Activated CD4-positive, alpha-beta T cell treated with anti-CD3 and anti-CD28 coated beads for 36 hours (primary cell): ENCODE measurements at regions of chr3 and their contacts with region 1.

Region 1: DNA sequence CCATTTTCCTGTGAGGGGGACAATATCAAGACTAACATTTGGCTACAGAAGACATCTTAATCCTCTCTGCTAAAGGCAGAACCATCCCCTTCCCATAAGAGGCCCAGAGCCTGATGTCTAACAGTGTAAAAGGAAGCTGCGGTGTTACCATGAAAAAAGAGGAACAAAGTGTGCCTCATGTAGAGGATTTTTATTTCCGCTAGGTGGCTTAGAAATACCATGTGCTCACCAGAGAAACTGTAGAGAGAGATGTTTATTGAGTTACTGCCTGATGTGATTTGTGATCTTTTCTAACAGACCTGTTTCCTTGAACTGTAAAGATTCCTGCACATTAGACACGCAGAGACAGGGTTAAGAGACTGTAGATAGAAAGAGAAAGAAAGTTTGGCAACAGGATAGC is 22.0 kb downstream of the OR5H15 start:
- DNase-seq: no peak
- ATAC-seq: peak; percentile 49
- H3K4me3 Mint-ChIP-seq: no peak overlapping the region
- H3K27ac Mint-ChIP-seq: no peak overlapping the region
- H3K4me1 Mint-ChIP-seq: peaks cover 4% of the 10 kb centered on the region
- H3K27me3 Mint-ChIP-seq: peaks cover 5% of the 10 kb centered on the region

Region 2: DNA sequence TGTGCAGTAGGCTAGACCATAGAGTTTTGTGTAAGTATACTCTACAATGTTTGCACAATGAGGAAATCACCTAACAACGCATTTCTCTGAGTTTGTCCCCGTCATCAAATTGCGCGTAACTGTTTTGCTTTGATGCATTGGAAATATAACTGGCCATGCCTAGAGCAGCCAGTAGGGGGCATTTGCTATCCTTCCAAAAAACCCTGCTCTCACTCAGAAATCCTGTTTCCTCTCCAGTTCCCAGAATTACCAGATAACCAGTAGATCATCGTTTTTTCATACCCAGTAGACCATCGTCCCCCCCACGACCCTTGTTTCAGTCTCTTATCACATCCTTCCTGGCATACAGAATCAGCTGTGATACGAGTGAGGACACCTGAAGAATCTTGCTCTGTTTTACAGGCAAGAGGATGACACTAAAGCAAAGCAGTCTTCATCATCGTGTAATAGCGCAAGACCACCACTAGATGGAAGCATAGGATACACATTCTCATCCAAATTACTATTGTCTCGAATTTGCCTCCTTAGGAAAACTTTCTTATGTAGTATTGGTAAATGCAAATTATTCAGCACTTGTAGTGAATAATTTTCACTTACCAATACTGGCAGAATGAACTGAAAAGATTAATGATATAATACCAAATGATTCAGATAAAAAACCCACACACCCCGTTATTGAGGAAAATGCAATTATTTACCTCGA is 149.1 kb before region 1 on chr3:
- CTCF ChIA-PET with region 1: no interaction called
- POLR2A ChIA-PET with region 1: no interaction called
- intact Hi-C with region 1: loop called in 1 of 2 experiments (anchors 2 kb)
- DNase-seq: peak; percentile 84
- ATAC-seq: peak; percentile 88
- H3K4me3 Mint-ChIP-seq: peak overlapping the region; percentile 76
- H3K27ac Mint-ChIP-seq: peak overlapping the region; percentile 97
- H3K4me1 Mint-ChIP-seq: peaks cover 12% of the 10 kb centered on the region
- H3K27me3 Mint-ChIP-seq: peaks cover 4% of the 10 kb centered on the region

Region 3: DNA sequence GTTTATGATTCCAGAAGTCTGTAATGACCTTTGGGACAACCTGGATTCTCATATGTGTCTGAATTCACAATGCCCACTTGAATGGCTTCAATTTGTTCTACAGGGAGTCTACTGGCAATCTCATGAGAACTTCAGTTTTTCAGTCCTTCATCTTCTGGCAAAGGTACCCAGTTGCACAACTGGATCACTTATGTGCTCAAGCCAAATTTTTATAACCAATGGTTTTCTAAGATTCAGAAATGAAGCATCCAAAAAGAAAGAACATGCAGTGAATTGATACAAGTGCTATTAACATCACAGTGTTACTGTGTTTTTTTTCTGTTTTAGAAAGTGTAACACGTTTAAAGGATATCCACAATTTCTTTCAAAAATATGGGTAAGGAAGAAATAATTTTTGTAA is 41.4 kb before region 1 on chr3 and contains the start of gene OR5H14:
- CTCF ChIA-PET with region 1: no interaction called
- POLR2A ChIA-PET with region 1: no interaction called
- intact Hi-C with region 1: no loop called
- DNase-seq: no peak
- ATAC-seq: no peak
- H3K4me3 Mint-ChIP-seq: no peak within 1 kb of the TSS
- H3K27ac Mint-ChIP-seq: no peak within 1 kb of the TSS
- H3K4me1 Mint-ChIP-seq: no peaks in the 10 kb centered on the region
- H3K27me3 Mint-ChIP-seq: peaks cover 6% of the 10 kb centered on the region
- total RNA-seq, gene OR5H14: 0.02 TPM in 1 of 2 experiments, not detected in the other

Region 4: GRCh38 chr3:98209244-98209643 is 20.7 kb after region 1 on chr3:
- CTCF ChIA-PET with region 1: no interaction called
- POLR2A ChIA-PET with region 1: no interaction called
- intact Hi-C with region 1: no loop called
- DNase-seq: no peak
- ATAC-seq: no peak
- H3K4me3 Mint-ChIP-seq: no peak overlapping the region
- H3K27ac Mint-ChIP-seq: no peak overlapping the region
- H3K4me1 Mint-ChIP-seq: no peaks in the 10 kb centered on the region
- H3K27me3 Mint-ChIP-seq: no peaks in the 10 kb centered on the region

Region 5: DNA sequence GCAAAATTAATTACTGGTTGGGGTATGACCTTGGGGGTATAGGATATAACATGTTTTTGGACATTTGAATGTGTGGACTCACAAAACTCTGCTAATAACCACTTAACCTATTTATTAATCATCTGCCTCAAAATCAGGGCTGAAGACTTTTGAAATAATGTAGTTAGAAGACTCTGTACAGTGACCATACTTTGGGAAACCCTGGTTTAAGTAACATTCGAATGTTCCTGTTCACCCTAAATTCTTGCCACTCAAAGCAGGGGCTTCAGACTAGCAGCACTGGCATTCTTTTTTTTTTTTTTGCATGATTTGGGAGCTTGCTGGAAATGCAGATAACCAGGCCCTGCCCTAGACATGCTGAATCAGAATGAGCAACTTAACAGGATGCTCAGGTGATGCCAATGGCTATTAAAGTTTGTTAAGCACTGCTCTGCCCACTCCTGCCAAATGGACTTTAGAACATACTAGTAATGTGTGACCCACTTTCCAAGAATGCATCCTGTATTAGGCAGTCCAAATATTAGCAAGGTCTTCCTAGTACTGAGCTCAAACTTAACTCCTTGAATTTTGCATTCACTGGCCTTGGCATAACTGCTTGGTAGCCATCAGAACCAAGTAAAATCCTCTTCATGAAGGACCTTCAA is 561.9 kb after region 1 on chr3:
- CTCF ChIA-PET with region 1: no interaction called
- POLR2A ChIA-PET with region 1: no interaction called
- intact Hi-C with region 1: no loop called
- DNase-seq: no peak
- ATAC-seq: no peak
- H3K4me3 Mint-ChIP-seq: no peak overlapping the region
- H3K27ac Mint-ChIP-seq: no peak overlapping the region
- H3K4me1 Mint-ChIP-seq: no peaks in the 10 kb centered on the region
- H3K27me3 Mint-ChIP-seq: peaks cover 13% of the 10 kb centered on the region